Spleen (tissue), 13 donors: ENCODE measurements at regions of chr11 and their contacts with region 1.

Region 1: DNA sequence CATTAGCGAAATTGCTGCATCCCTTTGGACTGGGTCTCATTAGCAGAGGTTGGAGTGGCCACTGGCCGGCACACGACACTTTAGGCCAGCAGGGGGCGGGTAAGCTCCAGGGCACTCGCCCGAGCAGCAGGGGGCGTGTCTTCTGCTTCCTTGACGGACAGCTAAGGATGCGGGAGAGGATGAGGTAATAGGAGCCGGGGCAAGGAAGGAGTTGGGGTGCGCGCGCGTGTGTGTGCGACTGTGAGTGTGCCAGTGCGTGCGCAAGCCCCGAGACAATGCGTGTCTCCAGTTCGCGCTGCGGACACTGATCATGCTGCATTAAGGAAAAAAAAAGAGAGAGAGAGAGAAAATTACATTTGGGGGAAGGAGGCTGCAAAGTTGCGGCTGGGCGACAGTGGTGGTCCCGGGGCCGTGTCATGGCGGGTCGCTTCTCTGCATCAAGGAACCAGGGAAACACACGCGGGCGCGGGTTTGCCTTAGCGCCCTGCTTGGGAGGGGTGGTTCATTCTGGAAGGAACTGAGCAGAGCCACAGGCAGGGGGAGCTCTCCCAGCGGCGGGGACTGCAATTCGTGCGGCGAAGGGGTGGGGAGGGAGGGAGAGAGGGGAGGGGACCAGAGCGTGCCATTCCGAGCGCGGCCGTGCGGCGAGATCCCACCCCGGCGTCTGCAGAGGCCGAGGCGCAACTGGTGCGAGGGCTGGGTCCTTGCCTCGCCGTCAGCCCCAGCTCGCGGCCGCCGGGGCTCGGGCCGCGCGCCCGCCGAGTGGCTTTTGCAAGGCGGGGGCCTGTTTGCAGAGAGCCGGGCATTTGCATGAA is at the start of gene DTX4:
- DNase-seq: peak; percentile 98
- H3K4me3 ChIP-seq: peak within 1 kb of the TSS; percentile 52 to 96 (median 86)
- H3K27ac ChIP-seq: peak within 1 kb of the TSS in 7 of 8 donors; percentile 69 to 85 (median 78)
- H3K4me1 ChIP-seq: peaks cover 3 to 42% (median 24%) of the 10 kb centered on the region in 6 donors
- H3K27me3 ChIP-seq: peaks cover 0 to 17% (median 0%) of the 10 kb centered on the region in 7 donors
- CTCF ChIP-seq: peak; percentile 86 to 97 (median 91)
- POLR2A ChIP-seq: no peak
- total RNA-seq, gene DTX4: 8.3 to 19.1 (median 14.4) TPM

Region 2: DNA sequence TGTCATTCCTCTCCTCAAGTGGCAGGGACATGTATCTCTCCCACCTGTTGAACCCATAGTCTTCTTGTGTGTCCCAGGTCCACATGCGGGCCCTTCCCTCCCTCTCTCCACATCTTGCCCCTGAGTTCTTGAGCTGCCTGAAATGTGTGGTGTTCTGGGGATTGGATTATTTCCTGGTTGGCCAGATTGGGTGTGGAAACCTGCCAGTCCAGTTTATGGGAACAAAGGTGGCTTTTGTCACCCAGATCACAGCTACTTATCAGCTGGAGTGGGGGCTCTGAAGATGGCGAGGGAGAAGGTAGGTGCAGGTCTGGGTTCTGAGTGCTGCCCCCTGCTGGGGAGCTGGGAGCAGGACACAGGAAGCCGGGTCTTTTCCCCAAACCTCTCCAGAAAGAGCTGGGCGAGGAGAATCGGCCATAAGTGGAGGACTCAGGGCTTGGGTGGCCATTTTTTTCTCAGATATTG is 14.4 kb after region 1 on chr11:
- intact Hi-C with region 1: no loop called
- DNase-seq: no peak
- H3K4me3 ChIP-seq: no peak overlapping the region
- H3K27ac ChIP-seq: peak overlapping the region in 4 of 8 donors; percentile 8 to 56 (median 24)
- H3K4me1 ChIP-seq: peaks cover 10 to 73% (median 43%) of the 10 kb centered on the region in 6 donors
- H3K27me3 ChIP-seq: no peaks in the 10 kb centered on the region
- CTCF ChIP-seq: peak; percentile 14 to 82 (median 65)
- POLR2A ChIP-seq: no peak

Region 3: GRCh38 chr11:59207988-59208451 is 36.3 kb after region 1 on chr11:
- intact Hi-C with region 1: loop called (anchors 5 kb)
- DNase-seq: no peak
- H3K4me3 ChIP-seq: peak overlapping the region; percentile 27 to 69 (median 50)
- H3K27ac ChIP-seq: peak overlapping the region in 7 of 8 donors; percentile 29 to 92 (median 88)
- H3K4me1 ChIP-seq: peaks cover 15 to 85% (median 41%) of the 10 kb centered on the region in 6 donors
- H3K27me3 ChIP-seq: no peaks in the 10 kb centered on the region
- CTCF ChIP-seq: peak; percentile 28 to 83 (median 71)
- POLR2A ChIP-seq: peak in 1 of 3 donors; percentile 12

Region 4: GRCh38 chr11:59283825-59284772 is 112.4 kb after region 1 on chr11:
- intact Hi-C with region 1: loop called (anchors 5 kb)
- DNase-seq: no peak
- H3K4me3 ChIP-seq: peak overlapping the region in 2 of 8 donors; percentile 2 to 52
- H3K27ac ChIP-seq: peak overlapping the region in 6 of 8 donors; percentile 16 to 81 (median 48)
- H3K4me1 ChIP-seq: peaks cover 0 to 33% (median 20%) of the 10 kb centered on the region in 6 donors
- H3K27me3 ChIP-seq: no peaks in the 10 kb centered on the region
- CTCF ChIP-seq: peak; percentile 60 to 93 (median 83)
- POLR2A ChIP-seq: no peak

Region 5: DNA sequence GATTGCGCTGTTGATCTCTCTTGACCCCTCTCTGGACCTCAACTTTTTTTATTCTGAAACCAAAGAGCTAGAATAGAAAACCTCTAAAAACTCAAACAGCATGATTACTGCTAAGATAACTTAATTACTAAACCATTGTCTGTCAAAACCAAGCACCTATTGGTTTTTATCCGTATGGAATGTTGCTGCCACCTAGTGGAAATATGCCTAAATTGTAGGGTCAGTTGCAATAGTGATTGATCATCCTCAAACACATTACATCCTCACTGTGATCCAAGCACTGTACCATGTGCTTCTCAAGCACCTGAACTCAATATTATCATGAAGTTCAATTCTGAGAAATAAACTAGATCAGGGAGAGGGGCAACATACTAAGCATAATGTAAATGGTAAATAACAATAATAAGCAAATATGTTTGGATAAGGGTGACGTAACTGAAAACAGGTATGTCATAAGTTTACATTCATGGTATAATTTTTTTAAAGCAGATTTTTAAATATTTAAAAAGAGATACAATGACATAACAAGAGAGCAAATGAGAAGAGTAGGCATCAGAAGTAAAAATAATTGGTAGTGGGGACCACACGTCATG is 258.3 kb after region 1 on chr11:
- intact Hi-C with region 1: loop called (anchors 5 kb)
- DNase-seq: no peak
- H3K4me3 ChIP-seq: no peak overlapping the region
- H3K27ac ChIP-seq: no peak overlapping the region
- H3K4me1 ChIP-seq: no peaks in the 10 kb centered on the region
- H3K27me3 ChIP-seq: peaks cover 0 to 5% (median 0%) of the 10 kb centered on the region in 7 donors
- CTCF ChIP-seq: peak; percentile 63 to 86 (median 79)
- POLR2A ChIP-seq: no peak